Dorsolateral prefrontal cortex (tissue), 120 donors: ENCODE measurements at regions of chr13 and their contacts with region 1.

Region 1: DNA sequence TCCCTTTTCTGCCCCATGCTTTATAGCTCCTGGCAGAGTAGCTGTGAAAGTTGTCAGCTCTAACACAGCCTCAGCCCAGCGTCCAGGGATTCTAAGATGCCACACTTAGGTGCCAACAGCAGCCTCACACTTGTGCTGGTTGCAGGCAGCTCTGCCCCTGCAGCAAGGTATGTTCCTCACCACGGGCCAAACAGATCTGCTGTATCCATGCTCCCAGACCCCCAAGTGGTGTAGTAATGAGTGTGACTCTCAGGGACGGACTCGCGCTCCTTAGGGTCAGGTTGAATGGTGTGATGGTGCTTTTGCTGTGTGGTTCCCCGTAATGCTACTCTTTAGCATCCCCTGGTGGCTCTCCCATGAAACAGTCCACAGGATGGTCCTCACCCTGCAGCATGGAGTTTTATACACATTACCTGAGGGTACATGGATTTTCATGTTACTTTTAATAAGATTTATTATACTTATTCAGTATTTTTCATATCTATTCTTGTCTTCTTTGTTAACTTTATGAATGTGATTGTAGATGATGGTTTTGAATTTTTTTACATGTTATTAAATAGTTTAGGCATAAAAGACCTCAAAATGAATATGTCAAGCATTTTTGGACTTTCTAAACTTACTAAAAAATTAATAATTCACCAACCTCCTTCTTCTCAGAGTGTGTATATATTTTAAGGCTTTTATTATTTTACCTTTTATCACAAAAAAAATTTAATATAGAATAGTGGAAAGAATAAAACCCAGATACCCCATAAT is 232.5 kb downstream of the SLC7A1 start:
- DNase-seq: peak in 7 of 10 donors; percentile 37 to 66 (median 50)
- H3K4me3 ChIP-seq: peak overlapping the region in 20 of 59 donors; percentile 6 to 46 (median 28)
- H3K27ac ChIP-seq: no peak overlapping the region
- H3K27me3 ChIP-seq: no peaks in the 10 kb centered on the region
- CTCF ChIP-seq: peak; percentile 72 to 97 (median 90)

Region 2: GRCh38 chr13:29284726-29285125 is 78.3 kb before region 1 on chr13:
- intact Hi-C with region 1: loop called in 1 of 2 experiments (anchors 5 kb)
- DNase-seq: no peak
- H3K4me3 ChIP-seq: no peak overlapping the region
- H3K27ac ChIP-seq: no peak overlapping the region
- H3K27me3 ChIP-seq: peaks cover 0 to 4% (median 0%) of the 10 kb centered on the region in 45 donors
- CTCF ChIP-seq: peak in 15 of 56 donors; percentile 11 to 50 (median 29)

Region 3: GRCh38 chr13:29310806-29311205 is 52.2 kb before region 1 on chr13:
- intact Hi-C with region 1: loop called in 1 of 2 experiments (anchors 5 kb)
- DNase-seq: no peak
- H3K4me3 ChIP-seq: peak overlapping the region in 9 of 59 donors; percentile 1 to 33 (median 9)
- H3K27ac ChIP-seq: peak overlapping the region in 13 of 59 donors; percentile 17 to 69 (median 48)
- H3K27me3 ChIP-seq: no peaks in the 10 kb centered on the region
- CTCF ChIP-seq: no peak

Region 4: GRCh38 chr13:29384466-29384865 is 21.4 kb after region 1 on chr13:
- intact Hi-C with region 1: no loop called
- DNase-seq: no peak
- H3K4me3 ChIP-seq: no peak overlapping the region
- H3K27ac ChIP-seq: no peak overlapping the region
- H3K27me3 ChIP-seq: no peaks in the 10 kb centered on the region
- CTCF ChIP-seq: no peak